Naive thymus-derived CD4-positive, alpha-beta T cell (primary cell): ENCODE measurements at regions of chr6 and their contacts with region 1.

Region 1: DNA sequence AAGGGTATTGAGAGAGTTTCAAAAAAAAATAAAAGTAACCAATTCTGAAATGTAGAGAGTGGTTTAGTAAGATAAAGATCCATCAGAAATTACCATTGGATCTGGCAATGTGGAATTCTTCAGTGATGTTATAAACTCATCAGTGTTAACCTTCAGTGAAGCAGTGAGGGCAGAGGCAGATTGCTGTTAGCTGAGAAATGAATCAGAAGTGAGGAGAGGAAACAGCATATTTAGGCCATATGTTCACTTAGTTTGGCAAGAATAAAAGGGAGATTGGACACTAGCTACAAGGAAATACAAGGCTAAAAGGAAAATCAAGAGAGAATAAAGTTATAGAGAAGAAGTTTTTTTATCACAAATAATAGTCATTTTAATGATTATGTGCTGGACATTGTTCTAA is 9.6 kb downstream of the KCNQ5 start:
- DNase-seq: no peak
- ATAC-seq: no peak
- H3K4me3 ChIP-seq: no peak overlapping the region
- H3K4me3 Mint-ChIP-seq: no peak overlapping the region
- H3K27ac ChIP-seq: no peak overlapping the region
- H3K27ac Mint-ChIP-seq: no peak overlapping the region
- H3K4me1 ChIP-seq: no peaks in the 10 kb centered on the region
- H3K4me1 Mint-ChIP-seq: peaks cover 3 to 31% (median 6%) of the 10 kb centered on the region in 7 donors
- H3K27me3 ChIP-seq: no peaks in the 10 kb centered on the region
- H3K27me3 Mint-ChIP-seq: no peaks in the 10 kb centered on the region

Region 2: DNA sequence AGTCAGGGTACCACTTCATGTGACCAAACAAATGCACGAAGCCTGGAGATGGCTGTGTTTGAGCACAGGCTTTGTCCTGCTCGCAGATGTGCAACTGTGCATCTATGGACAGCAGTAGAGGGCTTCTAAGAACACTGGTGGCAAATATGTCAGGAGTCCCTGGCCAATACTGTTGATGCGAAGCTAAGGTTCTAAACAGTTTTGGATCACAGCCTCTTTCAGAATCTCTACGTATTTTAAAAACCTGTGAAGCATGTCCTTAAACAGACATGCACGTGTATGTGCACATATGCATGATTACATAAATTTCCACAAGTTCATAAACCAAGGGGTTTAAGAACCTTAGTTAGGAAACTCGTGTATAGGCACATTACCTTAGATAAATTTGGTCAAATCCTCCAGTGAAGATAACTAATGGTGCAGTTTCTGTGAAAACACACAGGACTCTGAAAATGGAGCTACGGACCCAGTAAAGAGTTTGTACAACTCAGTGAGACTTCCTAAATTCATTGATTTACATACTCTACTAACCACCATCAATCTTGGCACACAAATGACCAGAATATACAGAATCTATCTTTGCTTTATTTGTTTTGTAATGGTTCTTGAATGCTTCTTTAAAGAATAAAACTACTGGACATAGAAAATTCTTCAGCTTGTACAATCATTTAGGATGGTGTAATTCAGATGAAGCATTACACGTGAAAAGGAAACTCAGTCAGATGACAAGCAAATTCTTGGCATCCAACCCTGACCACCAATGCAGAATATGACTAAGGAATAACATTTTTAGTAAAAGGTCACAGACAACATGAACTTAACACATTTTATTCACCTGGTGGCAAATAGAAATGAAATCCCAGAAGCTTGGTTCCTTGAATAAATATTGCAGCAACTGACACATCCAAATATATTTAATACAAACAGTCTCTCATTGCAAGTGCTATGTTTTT is 17.8 kb after region 1 on chr6:
- CTCF ChIA-PET with region 1: no interaction called
- POLR2A ChIA-PET with region 1: no interaction called
- intact Hi-C with region 1: loop called in 1 of 2 experiments (anchors 2 kb)
- DNase-seq: no peak
- ATAC-seq: no peak
- H3K4me3 ChIP-seq: no peak overlapping the region
- H3K4me3 Mint-ChIP-seq: no peak overlapping the region
- H3K27ac ChIP-seq: no peak overlapping the region
- H3K27ac Mint-ChIP-seq: no peak overlapping the region
- H3K4me1 ChIP-seq: no peaks in the 10 kb centered on the region
- H3K4me1 Mint-ChIP-seq: peaks cover 0 to 17% (median 0%) of the 10 kb centered on the region in 7 donors
- H3K27me3 ChIP-seq: no peaks in the 10 kb centered on the region
- H3K27me3 Mint-ChIP-seq: no peaks in the 10 kb centered on the region

Region 3: GRCh38 chr6:72787391-72788031 is 156.0 kb after region 1 on chr6:
- CTCF ChIA-PET with region 1: no interaction called
- POLR2A ChIA-PET with region 1: no interaction called
- intact Hi-C with region 1: no loop called
- DNase-seq: no peak
- ATAC-seq: no peak
- H3K4me3 ChIP-seq: no peak overlapping the region
- H3K4me3 Mint-ChIP-seq: no peak overlapping the region
- H3K27ac ChIP-seq: no peak overlapping the region
- H3K27ac Mint-ChIP-seq: peak overlapping the region in 1 of 9 donors; percentile 53
- H3K4me1 ChIP-seq: no peaks in the 10 kb centered on the region
- H3K4me1 Mint-ChIP-seq: peaks cover 0 to 5% (median 0%) of the 10 kb centered on the region in 7 donors
- H3K27me3 ChIP-seq: no peaks in the 10 kb centered on the region
- H3K27me3 Mint-ChIP-seq: no peaks in the 10 kb centered on the region